Calu3 (cell line): ENCODE measurements at regions of chr3 and their contacts with region 1.

Region 1: GRCh38 chr3:182618085-182618732 is 175.1 kb upstream of the ATP11B start:
- DNase-seq: peak; percentile 57
- H3K4me3 Mint-ChIP-seq: no peak overlapping the region
- H3K27ac Mint-ChIP-seq: no peak overlapping the region
- H3K4me1 Mint-ChIP-seq: peaks cover 17% of the 10 kb centered on the region
- H3K27me3 Mint-ChIP-seq: no peaks in the 10 kb centered on the region
- CTCF ChIP-seq: peak; percentile 87

Region 2: DNA sequence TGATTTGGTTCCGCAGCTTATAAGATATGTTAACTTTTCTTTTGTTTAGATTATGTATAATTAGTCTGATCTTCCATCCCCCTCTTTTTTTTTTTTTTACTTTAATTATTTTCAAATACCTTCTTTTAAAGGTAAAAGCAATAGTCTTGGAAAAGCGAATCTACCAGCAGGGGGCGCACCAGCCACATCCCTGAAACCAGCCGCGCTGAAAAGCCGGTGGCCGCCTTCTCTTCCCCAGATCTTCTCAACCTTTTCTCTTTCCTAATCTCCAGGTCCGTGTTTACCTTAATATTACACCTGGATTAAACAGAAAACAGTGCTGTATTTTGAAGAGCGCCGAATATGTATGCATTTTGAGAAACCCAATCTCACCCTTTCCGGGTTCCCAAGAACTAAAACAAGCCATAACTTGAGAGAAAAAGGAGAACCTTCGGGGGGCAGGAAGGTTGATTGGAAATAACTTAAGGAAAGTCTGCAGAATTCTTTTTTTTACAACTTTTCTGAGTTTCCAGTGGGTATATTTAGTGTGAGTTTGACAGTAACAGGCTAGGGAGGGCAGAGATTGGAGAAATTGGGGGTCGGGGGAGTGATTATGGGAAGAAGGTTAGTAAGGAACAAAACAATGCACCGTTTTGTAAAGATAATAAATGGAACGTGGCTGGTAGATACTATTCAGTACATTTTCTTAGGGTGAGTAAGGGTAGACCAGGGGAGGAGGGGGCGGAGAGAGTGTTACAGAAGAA is 908.5 kb before region 1 on chr3:
- CTCF ChIA-PET with region 1: no interaction called
- intact Hi-C with region 1: loop called (anchors 1 kb)
- DNase-seq: peak; percentile 92
- H3K4me3 Mint-ChIP-seq: peak overlapping the region; percentile 45
- H3K27ac Mint-ChIP-seq: peak overlapping the region; percentile 11
- H3K4me1 Mint-ChIP-seq: peaks cover 22% of the 10 kb centered on the region
- H3K27me3 Mint-ChIP-seq: peaks cover 11% of the 10 kb centered on the region
- CTCF ChIP-seq: peak; percentile 94

Region 3: GRCh38 chr3:182165235-182165784 is 452.9 kb before region 1 on chr3:
- CTCF ChIA-PET with region 1: no interaction called
- intact Hi-C with region 1: loop called (anchors 5 kb)
- DNase-seq: peak; percentile 88
- H3K4me3 Mint-ChIP-seq: peak overlapping the region; percentile 17
- H3K27ac Mint-ChIP-seq: peak overlapping the region; percentile 34
- H3K4me1 Mint-ChIP-seq: peaks cover 8% of the 10 kb centered on the region
- H3K27me3 Mint-ChIP-seq: no peaks in the 10 kb centered on the region
- CTCF ChIP-seq: no peak

Region 4: DNA sequence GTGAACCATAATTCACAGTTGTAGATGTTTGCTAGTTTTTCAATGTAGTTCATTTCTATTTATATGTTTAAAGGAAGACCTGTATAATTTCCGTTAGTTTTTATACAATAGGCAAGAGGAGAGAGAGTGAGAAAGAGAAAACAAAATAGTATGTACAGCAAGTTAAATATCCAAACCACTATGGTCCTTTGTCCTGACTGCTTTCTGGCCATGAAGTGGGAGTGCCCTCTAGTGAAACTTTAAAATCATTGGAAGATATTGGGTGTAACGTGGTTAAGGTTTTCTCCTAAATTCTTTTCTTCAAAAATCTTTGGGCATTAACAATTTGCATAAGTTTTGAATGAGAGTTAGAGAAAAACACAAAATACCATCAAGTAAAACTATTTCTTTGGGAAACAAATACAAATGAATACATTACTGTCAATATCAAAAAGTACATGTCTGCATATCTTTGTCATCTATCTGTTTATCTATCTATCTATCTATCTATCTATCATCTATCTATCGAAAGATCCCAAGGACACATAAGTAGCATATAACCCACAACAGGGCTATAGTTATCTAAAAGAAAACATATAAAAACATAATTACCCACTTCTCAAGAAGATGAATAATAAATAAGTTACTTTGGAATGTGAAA is 359.6 kb before region 1 on chr3:
- CTCF ChIA-PET with region 1: interaction called, 3 read pairs
- intact Hi-C with region 1: loop called (anchors 1 kb)
- DNase-seq: peak; percentile 50
- H3K4me3 Mint-ChIP-seq: no peak overlapping the region
- H3K27ac Mint-ChIP-seq: no peak overlapping the region
- H3K4me1 Mint-ChIP-seq: peaks cover 17% of the 10 kb centered on the region
- H3K27me3 Mint-ChIP-seq: no peaks in the 10 kb centered on the region
- CTCF ChIP-seq: peak; percentile 62

Region 5: DNA sequence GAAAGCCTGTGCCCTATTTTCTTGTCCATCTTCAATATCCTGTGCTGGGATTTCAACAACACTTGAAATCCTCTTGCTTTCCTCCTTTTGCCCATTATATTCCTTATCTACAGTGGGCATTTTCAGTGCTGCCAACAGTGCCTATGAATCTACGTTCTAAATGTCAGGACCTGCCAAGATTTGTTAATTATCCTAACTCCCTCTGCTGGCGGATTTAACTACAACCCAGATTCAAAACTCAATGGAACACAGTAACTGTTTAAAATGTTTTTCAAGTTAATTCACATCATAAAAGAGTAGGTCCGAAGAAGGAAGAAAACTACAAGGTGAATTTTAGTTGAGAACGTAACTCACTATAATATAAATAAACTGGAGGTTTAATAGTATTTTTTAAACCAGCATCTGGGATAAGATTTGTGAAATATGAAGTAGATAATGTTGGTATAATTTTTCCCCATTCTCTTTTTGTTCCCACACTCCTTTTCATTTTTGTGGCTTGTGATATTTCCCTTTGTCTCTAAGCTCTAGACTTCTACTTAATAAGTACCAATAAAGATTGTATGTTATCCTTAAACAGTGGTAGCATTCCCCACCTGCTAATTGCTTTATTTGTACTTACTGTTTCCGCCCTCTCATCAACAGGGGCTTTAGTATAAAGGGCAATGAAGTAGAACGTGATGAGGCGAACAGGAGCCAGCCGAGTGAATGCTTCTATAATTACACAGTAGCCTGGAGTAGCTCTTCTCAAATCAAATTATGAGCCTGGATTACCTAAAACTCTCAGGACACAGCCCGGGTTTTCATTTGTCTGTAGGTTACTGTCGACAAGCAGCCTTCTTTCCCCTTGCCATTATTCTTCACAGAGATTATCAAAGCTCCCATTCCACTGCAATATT is 127.4 kb before region 1 on chr3:
- CTCF ChIA-PET with region 1: no interaction called
- intact Hi-C with region 1: loop called (anchors 2 kb)
- DNase-seq: peak; percentile 54
- H3K4me3 Mint-ChIP-seq: no peak overlapping the region
- H3K27ac Mint-ChIP-seq: no peak overlapping the region
- H3K4me1 Mint-ChIP-seq: peaks cover 24% of the 10 kb centered on the region
- H3K27me3 Mint-ChIP-seq: no peaks in the 10 kb centered on the region
- CTCF ChIP-seq: peak; percentile 70

Region 6: DNA sequence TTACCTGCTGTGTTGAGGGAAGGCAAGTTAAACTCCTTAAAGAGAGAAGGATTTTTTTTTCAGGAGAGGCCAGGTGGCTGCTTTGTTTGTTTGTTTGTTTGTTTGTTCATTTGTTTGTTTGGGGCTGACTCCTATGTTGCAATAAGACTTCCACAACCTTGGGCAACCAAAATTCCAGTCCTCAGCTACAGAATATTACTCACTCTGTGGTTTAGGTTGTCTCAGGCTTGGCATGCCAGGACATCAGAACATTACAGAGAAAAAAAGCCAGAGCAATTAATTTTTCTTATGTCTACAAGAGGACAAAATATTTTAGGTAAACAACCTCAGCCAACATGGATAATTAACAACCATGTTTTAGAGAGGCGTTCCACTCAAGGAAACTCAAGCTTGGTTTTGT is 18.4 kb after region 1 on chr3:
- CTCF ChIA-PET with region 1: no interaction called
- intact Hi-C with region 1: no loop called
- DNase-seq: no peak
- H3K4me3 Mint-ChIP-seq: no peak overlapping the region
- H3K27ac Mint-ChIP-seq: no peak overlapping the region
- H3K4me1 Mint-ChIP-seq: no peaks in the 10 kb centered on the region
- H3K27me3 Mint-ChIP-seq: no peaks in the 10 kb centered on the region
- CTCF ChIP-seq: no peak

Region 7: DNA sequence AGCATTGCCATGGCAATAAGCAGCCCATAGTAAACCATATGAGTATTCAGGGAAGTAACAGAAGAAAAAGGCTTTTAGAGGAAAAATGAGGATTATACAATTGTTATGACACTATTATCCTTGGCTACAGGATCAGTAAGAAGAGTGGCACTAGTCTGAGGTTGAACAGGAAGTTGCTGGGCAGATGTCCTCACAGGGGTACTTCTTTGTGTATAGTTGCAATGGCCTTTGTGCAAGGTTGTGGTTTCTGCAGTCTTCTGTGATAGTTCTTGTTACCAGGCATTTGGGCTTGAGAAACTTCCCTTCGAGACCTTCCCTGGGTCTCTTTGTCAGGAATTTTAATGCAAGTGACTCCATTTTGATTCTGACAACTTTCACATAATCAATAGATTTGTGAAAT is 74.5 kb after region 1 on chr3:
- CTCF ChIA-PET with region 1: no interaction called
- intact Hi-C with region 1: no loop called
- DNase-seq: no peak
- H3K4me3 Mint-ChIP-seq: no peak overlapping the region
- H3K27ac Mint-ChIP-seq: no peak overlapping the region
- H3K4me1 Mint-ChIP-seq: peaks cover 10% of the 10 kb centered on the region
- H3K27me3 Mint-ChIP-seq: no peaks in the 10 kb centered on the region
- CTCF ChIP-seq: no peak

Region 8: GRCh38 chr3:183339461-183340079 is 721.4 kb after region 1 on chr3:
- CTCF ChIA-PET with region 1: no interaction called
- intact Hi-C with region 1: no loop called
- DNase-seq: no peak
- H3K4me3 Mint-ChIP-seq: no peak overlapping the region
- H3K27ac Mint-ChIP-seq: no peak overlapping the region
- H3K4me1 Mint-ChIP-seq: no peaks in the 10 kb centered on the region
- H3K27me3 Mint-ChIP-seq: peaks cover 1% of the 10 kb centered on the region
- CTCF ChIP-seq: no peak